ENCODE measurements at regions of chr10 and their contacts with region 1.

Region 1: DNA sequence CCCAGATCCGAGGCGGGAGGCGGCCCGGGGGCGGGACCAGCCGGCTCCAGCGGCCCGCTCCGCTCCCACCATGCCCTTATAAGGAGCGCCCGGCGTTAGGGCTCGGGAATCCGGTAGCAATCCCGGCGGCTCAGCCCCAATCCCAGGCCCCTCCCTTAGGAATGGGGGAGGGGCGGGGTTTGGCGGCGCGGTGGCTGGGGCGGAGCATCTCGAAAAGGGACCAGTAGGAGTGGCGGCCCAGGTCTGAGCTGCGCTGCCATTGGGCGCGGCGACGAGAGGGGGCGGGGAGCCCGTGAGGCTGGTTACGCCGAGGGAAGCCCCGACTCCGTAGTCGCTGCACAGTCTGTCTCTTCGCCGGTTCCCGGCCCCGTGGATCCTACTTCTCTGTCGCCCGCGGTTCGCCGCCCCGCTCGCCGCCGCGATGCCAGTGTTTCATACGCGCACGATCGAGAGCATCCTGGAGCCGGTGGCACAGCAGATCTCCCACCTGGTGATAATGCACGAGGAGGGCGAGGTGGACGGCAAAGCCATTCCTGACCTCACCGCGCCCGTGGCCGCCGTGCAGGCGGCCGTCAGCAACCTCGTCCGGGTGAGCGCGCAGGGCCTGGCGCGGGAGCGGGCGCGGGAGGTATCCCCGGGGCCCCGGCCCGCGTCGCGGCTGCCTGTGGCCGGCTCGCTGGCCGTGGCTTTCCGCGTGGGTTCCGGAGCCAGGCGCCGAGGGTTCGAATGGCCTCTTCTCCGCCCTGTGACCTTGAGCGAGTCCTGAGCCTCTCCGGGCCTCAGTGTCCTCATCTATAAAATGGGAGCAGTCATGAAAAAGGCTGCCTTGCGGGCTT is at the start of gene VCL:
- DNase-seq: peak; percentile 99
- H3K4me3 ChIP-seq: peak within 1 kb of the TSS; percentile 83
- H3K27ac ChIP-seq: peak within 1 kb of the TSS; percentile 98
- H3K4me1 ChIP-seq: peaks cover 38% of the 10 kb centered on the region
- H3K27me3 ChIP-seq: no peaks in the 10 kb centered on the region
- CTCF ChIP-seq: no peak
- total RNA-seq, gene VCL: 159 and 176 TPM in 2 replicates

Region 2: DNA sequence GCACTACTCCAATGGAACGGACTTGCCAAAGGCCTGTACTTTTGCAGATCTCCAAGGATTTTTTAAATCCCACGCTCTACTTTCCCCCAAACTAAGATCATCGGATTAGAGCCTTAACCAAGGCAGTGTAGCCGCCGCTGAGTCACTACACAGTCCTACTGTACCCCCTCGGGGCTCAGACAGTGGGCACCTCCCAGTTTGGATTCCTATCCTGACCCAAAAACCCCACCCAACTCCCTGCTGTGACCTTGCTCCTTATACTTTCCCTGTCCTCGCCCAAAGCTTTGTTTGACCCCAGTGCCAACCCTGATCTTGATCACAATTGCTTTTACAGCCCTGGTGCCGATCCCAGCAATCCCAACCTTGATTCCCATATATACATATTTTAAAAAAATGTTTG is 104.6 kb before region 1 on chr10:
- CTCF ChIA-PET with region 1: no interaction called
- POLR2A ChIA-PET with region 1: no interaction called
- intact Hi-C with region 1: no loop called
- DNase-seq: no peak
- H3K4me3 ChIP-seq: no peak overlapping the region
- H3K27ac ChIP-seq: no peak overlapping the region
- H3K4me1 ChIP-seq: peaks cover 15% of the 10 kb centered on the region
- H3K27me3 ChIP-seq: no peaks in the 10 kb centered on the region
- CTCF ChIP-seq: no peak

Region 3: DNA sequence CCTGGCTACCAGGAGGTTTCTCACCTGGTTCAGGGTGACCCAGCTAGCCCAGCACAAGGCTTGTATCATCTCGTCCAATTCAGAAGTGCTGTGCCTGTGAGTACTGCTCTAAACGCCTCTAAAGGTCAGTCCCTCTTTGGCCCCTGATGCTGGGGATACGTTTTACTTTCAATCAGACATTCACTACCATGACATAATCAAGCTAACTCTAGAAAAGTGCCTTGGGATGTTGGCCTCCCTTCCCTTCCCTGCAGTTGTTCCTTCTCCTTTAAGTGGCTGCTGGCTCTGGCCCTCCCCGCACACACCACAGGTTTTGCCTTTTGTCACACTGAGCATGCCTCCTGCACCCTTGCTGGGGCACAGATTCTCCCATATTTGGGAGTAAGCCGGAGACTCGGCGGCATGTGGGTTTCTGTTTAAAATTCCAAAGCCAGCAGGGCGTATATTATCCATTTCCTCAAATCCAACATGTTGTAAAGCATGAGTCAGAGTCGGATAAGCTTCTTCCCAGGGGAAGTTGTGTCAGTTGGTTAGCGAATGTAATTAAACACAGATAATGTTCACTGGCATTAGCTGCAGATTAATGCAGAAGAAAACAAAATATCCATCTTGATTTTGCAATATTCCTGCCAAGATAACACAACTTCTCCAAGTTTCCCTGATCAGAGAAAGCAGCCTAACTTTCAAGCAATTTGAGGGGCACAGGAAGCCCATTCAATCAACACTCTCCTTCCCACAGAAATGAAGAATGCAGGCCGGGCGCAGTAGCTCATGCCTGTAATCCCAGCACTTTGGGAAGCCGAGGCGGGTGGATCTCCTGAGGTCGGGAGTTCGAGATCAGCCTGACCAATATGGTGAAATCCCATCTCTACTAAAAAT is 31.9 kb before region 1 on chr10:
- CTCF ChIA-PET with region 1: no interaction called
- POLR2A ChIA-PET with region 1: interaction called, 5 read pairs
- intact Hi-C with region 1: loop called (anchors 2 kb)
- DNase-seq: peak; percentile 100
- H3K4me3 ChIP-seq: no peak overlapping the region
- H3K27ac ChIP-seq: peak overlapping the region; percentile 98
- H3K4me1 ChIP-seq: peaks cover 46% of the 10 kb centered on the region
- H3K27me3 ChIP-seq: no peaks in the 10 kb centered on the region
- CTCF ChIP-seq: no peak

Region 4: GRCh38 chr10:73974309-73974946 is 23.6 kb before region 1 on chr10:
- CTCF ChIA-PET with region 1: no interaction called
- POLR2A ChIA-PET with region 1: no interaction called
- intact Hi-C with region 1: loop called (anchors 1 kb)
- DNase-seq: no peak
- H3K4me3 ChIP-seq: no peak overlapping the region
- H3K27ac ChIP-seq: no peak overlapping the region
- H3K4me1 ChIP-seq: peaks cover 17% of the 10 kb centered on the region
- H3K27me3 ChIP-seq: no peaks in the 10 kb centered on the region
- CTCF ChIP-seq: no peak

Region 5: GRCh38 chr10:73979809-73980433 is 18.1 kb before region 1 on chr10:
- CTCF ChIA-PET with region 1: no interaction called
- POLR2A ChIA-PET with region 1: interaction called, 13 read pairs
- intact Hi-C with region 1: no loop called
- DNase-seq: no peak
- H3K4me3 ChIP-seq: no peak overlapping the region
- H3K27ac ChIP-seq: no peak overlapping the region
- H3K4me1 ChIP-seq: peaks cover 5% of the 10 kb centered on the region
- H3K27me3 ChIP-seq: no peaks in the 10 kb centered on the region
- CTCF ChIP-seq: no peak

Region 6: GRCh38 chr10:74021248-74022055 is 23.4 kb after region 1 on chr10:
- CTCF ChIA-PET with region 1: interaction called, 10 read pairs
- POLR2A ChIA-PET with region 1: interaction called, 15 read pairs
- intact Hi-C with region 1: no loop called
- DNase-seq: peak; percentile 32
- H3K4me3 ChIP-seq: no peak overlapping the region
- H3K27ac ChIP-seq: peak overlapping the region; percentile 74
- H3K4me1 ChIP-seq: peaks cover 40% of the 10 kb centered on the region
- H3K27me3 ChIP-seq: no peaks in the 10 kb centered on the region
- CTCF ChIP-seq: no peak

Region 7: DNA sequence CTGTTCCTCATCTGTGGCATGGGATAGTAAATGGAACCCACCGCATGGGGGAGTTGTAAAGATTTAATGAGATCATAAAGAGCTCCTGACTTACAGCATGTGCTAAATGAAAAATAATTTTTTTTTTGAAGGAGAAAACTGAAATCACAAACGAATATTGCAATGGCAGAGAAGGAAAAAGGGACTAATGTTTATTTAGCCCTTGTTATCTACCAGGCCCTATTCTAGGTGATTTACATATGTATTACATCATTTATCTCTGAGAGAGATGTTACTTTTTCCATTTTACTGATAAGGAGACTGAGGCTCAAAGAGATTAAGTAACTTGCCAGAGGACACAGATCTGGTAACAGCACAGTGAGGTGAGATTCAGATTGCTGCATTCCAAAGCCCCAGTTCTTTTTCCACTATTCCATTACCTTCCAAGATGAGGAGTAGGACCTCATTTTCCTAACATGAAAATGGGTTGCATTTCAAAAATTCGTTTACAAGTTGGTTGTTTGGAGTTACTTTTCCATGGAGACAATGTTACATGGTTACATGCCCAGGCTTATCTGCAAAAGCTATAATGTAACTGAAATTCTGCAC is 28.5 kb after region 1 on chr10:
- CTCF ChIA-PET with region 1: interaction called, 10 read pairs
- POLR2A ChIA-PET with region 1: interaction called, 15 read pairs
- intact Hi-C with region 1: no loop called
- DNase-seq: no peak
- H3K4me3 ChIP-seq: no peak overlapping the region
- H3K27ac ChIP-seq: peak overlapping the region; percentile 2
- H3K4me1 ChIP-seq: peaks cover 60% of the 10 kb centered on the region
- H3K27me3 ChIP-seq: no peaks in the 10 kb centered on the region
- CTCF ChIP-seq: peak; percentile 48

Measured in A673 (cell line).